RWPE1 (cell line): ENCODE measurements at regions of chr5 and their contacts with region 1.

Region 1: GRCh38 chr5:96614110-96614691 is 48.0 kb upstream of the CAST start:
- DNase-seq: peak; percentile 94
- H3K27ac ChIP-seq: peak overlapping the region; percentile 68; the same call in 1 of the 2 replicates
- CTCF ChIP-seq: peak; percentile 66

Region 2: GRCh38 chr5:96548947-96549346 is 65.3 kb before region 1 on chr5:
- CTCF ChIA-PET with region 1: no interaction called
- POLR2A ChIA-PET with region 1: no interaction called
- DNase-seq: no peak
- H3K27ac ChIP-seq: no peak overlapping the region
- CTCF ChIP-seq: no peak

Region 3: DNA sequence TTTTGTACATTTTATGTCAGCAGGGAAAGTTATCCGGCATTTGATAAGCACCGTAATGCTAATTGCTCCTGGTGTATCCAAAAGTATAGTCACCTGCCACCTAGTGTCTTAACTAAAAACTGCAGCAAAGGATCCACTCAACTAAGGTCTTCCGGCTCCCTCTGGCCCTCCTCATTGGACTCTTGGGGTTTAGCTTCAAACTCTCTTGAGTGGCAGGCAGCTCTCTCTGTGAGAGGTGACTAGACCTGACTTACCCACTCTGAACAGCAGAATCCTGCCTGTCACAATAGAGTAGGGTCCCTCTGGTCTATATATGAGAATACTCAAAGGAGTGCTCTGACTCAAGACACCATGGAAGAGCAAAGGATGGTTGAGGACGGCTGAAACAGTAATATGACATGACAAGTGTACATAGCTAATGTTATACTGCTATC is 12.4 kb before region 1 on chr5:
- CTCF ChIA-PET with region 1: interaction called, 11 read pairs
- POLR2A ChIA-PET with region 1: no interaction called
- DNase-seq: peak; percentile 80
- H3K27ac ChIP-seq: no peak overlapping the region
- CTCF ChIP-seq: peak; percentile 95

Region 4: GRCh38 chr5:96648023-96648422 is 33.8 kb after region 1 on chr5:
- CTCF ChIA-PET with region 1: no interaction called
- POLR2A ChIA-PET with region 1: no interaction called
- DNase-seq: no peak
- H3K27ac ChIP-seq: no peak overlapping the region
- CTCF ChIP-seq: no peak

Region 5: GRCh38 chr5:96662725-96663513 is 48.7 kb after region 1 on chr5:
- CTCF ChIA-PET with region 1: interaction called, 8 read pairs
- POLR2A ChIA-PET with region 1: interaction called, 11 read pairs
- DNase-seq: peak; percentile 98
- H3K27ac ChIP-seq: peak overlapping the region; percentile 100
- CTCF ChIP-seq: no peak

Region 6: GRCh38 chr5:96687812-96688453 is 73.7 kb after region 1 on chr5:
- CTCF ChIA-PET with region 1: interaction called, 15 read pairs
- POLR2A ChIA-PET with region 1: no interaction called
- DNase-seq: peak; percentile 80
- H3K27ac ChIP-seq: no peak overlapping the region
- CTCF ChIP-seq: peak; percentile 86